ENCODE measurements at regions of chr17 and their contacts with region 1.

Region 1: GRCh38 chr17:35612924-35613521 is 25.9 kb downstream of the AP2B1 start:
- DNase-seq: no peak
- H3K4me3 ChIP-seq: no peak overlapping the region
- H3K27ac ChIP-seq: no peak overlapping the region
- H3K4me1 ChIP-seq: peaks cover 0 to 16% (median 0%) of the 10 kb centered on the region in 3 donors
- H3K27me3 ChIP-seq: no peaks in the 10 kb centered on the region
- CTCF ChIP-seq: peak in 5 of 6 experiments; percentile 28 to 67 (median 43)
- POLR2A ChIP-seq: no peak

Region 2: DNA sequence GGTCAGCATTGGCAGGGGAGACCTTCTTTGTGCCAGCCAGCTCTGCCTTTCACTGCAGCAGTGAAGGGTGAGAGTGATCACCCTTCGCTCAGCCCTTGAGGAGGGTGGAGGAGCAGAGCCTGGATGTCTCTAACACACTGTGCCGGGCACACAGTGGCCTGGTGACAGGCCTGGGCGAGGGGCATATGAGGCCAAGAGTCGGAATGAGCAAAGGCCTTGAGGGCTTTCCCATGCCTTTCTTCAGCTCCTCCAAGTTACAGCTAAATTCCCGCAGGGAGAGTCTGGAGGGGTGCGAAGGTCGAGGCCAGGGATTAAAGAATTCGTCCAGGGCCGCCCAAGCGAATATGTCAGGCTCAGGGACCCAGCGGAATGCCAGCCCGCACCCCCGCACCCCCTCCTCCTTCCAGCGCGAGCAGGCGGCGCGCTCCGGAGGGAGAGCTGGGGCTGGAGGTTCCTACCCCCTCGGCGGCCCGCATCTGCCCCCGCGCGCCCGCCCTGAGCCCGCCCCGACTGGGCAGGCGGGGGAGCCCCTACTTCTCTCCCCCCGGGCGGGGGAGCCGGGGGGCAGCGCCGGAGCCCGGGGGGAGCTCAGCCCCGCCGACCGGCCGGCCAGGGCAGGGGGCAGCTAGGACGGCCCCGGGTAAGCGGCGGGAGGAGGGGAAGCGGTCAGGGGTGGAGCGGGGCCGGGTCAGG is 118.4 kb after region 1 on chr17 and contains the start of gene RASL10B:
- intact Hi-C with region 1: no loop called
- DNase-seq: no peak
- H3K4me3 ChIP-seq: peak within 1 kb of the TSS; percentile 50 to 76 (median 58)
- H3K27ac ChIP-seq: peak within 1 kb of the TSS in 1 of 4 donors; percentile 39
- H3K4me1 ChIP-seq: peaks cover 9 to 29% (median 16%) of the 10 kb centered on the region in 3 donors
- H3K27me3 ChIP-seq: peaks cover 0 to 16% (median 0%) of the 10 kb centered on the region in 4 donors
- CTCF ChIP-seq: no peak
- POLR2A ChIP-seq: no peak
- total RNA-seq, gene RASL10B: 0.34 to 1.5 (median 0.89) TPM

Region 3: GRCh38 chr17:35747540-35748017 is 134.6 kb after region 1 on chr17:
- intact Hi-C with region 1: loop called (anchors 5 kb)
- DNase-seq: no peak
- H3K4me3 ChIP-seq: no peak overlapping the region
- H3K27ac ChIP-seq: no peak overlapping the region
- H3K4me1 ChIP-seq: peaks cover 10 to 44% (median 19%) of the 10 kb centered on the region in 3 donors
- H3K27me3 ChIP-seq: peaks cover 0 to 99% (median 7%) of the 10 kb centered on the region in 4 donors
- CTCF ChIP-seq: peak; percentile 84 to 94 (median 92)
- POLR2A ChIP-seq: no peak

Measured in esophagus squamous epithelium (tissue), 5 donors.